GM12878 (cell line): ENCODE measurements at regions of chr5 and their contacts with region 1.

Region 1: GRCh38 chr5:151499501-151500035 is 52.2 kb downstream of the SLC36A1 start:
- DNase-seq: no peak
- ATAC-seq: no peak
- H3K4me3 ChIP-seq: no peak overlapping the region
- H3K27ac ChIP-seq: no peak overlapping the region
- H3K4me1 ChIP-seq: peaks cover 5% of the 10 kb centered on the region; the same call in 1 of the 2 replicates
- H3K27me3 ChIP-seq: no peaks in the 10 kb centered on the region
- CTCF ChIP-seq: no peak
- EP300 ChIP-seq: no peak
- POLR2A ChIP-seq: no peak
- RAD21 ChIP-seq: no peak

Region 2: DNA sequence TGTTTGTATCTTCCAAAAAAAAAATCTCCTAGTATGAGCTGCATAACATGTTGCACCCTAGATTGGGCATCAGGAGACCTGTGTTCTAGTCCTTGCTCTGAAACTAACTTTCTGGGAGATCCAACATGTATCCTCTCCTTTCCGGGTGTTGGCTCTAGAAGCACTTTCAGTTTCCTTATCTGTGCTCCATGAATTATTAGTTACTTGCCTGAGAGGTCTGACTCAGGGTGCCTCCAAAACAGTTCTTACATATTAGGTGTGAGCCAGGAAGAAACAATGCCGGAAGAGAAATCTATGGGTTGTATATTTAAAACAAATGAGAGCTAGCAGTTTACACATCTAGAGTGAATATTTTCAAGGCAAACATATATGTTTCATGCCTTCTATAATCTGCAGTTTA is 115.5 kb before region 1 on chr5:
- CTCF ChIA-PET with region 1: no interaction called
- POLR2A ChIA-PET with region 1: no interaction called
- RAD21 ChIA-PET with region 1: no interaction called
- SMC1A ChIA-PET with region 1: no interaction called
- in situ Hi-C with region 1: no loop called
- intact Hi-C with region 1: loop called (anchors 5 kb)
- DNase-seq: no peak
- ATAC-seq: no peak
- H3K4me3 ChIP-seq: no peak overlapping the region
- H3K27ac ChIP-seq: no peak overlapping the region
- H3K4me1 ChIP-seq: no peaks in the 10 kb centered on the region
- H3K27me3 ChIP-seq: no peaks in the 10 kb centered on the region; a peak in 1 of 4 replicates
- CTCF ChIP-seq: no peak
- EP300 ChIP-seq: no peak
- POLR2A ChIP-seq: no peak
- RAD21 ChIP-seq: no peak

Region 3: DNA sequence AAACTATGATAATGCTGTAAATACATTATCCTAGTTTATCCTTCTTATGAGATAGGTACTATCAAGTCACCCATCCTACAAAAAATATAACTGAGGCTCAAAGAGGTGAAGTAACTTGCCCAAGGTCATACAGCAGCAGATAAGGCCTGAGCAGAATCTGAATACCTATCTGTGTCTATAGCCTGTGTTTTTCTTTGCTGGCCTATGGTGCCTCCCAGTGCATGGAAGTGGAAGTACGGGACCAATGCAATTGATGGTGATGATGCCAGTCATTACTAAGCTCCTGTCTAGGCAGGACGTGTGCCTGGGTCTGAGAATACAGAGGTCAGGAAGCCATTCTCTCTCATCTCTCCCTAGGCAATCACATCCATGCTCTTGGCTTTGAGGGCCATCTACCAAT is 23.8 kb after region 1 on chr5:
- CTCF ChIA-PET with region 1: interaction called, 8 read pairs
- POLR2A ChIA-PET with region 1: no interaction called
- RAD21 ChIA-PET with region 1: interaction called, 5 read pairs
- SMC1A ChIA-PET with region 1: interaction called, 10 read pairs
- in situ Hi-C with region 1: no loop called
- intact Hi-C with region 1: no loop called
- DNase-seq: no peak
- ATAC-seq: peak; percentile 97
- H3K4me3 ChIP-seq: no peak overlapping the region
- H3K27ac ChIP-seq: no peak overlapping the region
- H3K4me1 ChIP-seq: no peaks in the 10 kb centered on the region
- H3K27me3 ChIP-seq: peaks cover 0 to 1% of the 10 kb centered on the region in 2 experiments; a peak in 2 of 4 replicates
- CTCF ChIP-seq: peak; percentile 64 to 71 (median 68); a peak in 5 of 6 replicates
- EP300 ChIP-seq: no peak
- POLR2A ChIP-seq: no peak
- RAD21 ChIP-seq: peak; percentile 77